GM12878 (cell line): ENCODE measurements at regions of chr3 and their contacts with region 1.

Region 1: GRCh38 chr3:120688121-120688520 is 6.1 kb upstream of the HGD start:
- DNase-seq: peak; percentile 55
- ATAC-seq: peak; percentile 96
- H3K4me3 ChIP-seq: 0 out of 2 replicates have a peak overlapping the region, but pooled peaks have one; percentile 30
- H3K27ac ChIP-seq: peak overlapping the region; percentile 75
- H3K4me1 ChIP-seq: peaks cover 7% of the 10 kb centered on the region; the same call in 1 of the 2 replicates
- H3K27me3 ChIP-seq: no peaks in the 10 kb centered on the region
- CTCF ChIP-seq: no peak
- EP300 ChIP-seq: 0 out of 4 replicates have a peak, but pooled peaks of 1 of the 2 experiments have one; percentile 41
- POLR2A ChIP-seq: no peak
- RAD21 ChIP-seq: no peak

Region 2: DNA sequence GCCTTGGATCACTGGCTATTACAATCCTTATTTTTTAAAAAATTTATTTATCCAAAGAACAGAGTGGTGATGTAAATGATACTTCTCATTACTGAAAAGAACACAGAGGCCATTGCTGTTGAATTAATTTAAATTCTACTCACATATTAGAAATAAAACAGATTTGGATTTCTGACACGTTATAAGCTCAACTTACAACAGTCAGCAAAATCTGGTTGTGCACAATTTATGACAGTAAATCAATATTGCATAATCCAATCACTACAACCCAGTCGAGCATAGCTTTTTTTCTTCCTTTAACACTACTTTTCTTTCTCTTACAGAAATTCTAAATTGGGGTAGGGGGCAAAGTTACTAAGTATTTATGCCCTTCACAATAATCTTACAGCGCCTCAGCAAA is 11.2 kb after region 1 on chr3:
- CTCF ChIA-PET with region 1: interaction called, 4 read pairs
- POLR2A ChIA-PET with region 1: interaction called, 3 read pairs
- RAD21 ChIA-PET with region 1: interaction called, 5 read pairs
- SMC1A ChIA-PET with region 1: interaction called, 15 read pairs
- in situ Hi-C with region 1: no loop called
- intact Hi-C with region 1: no loop called
- DNase-seq: no peak
- ATAC-seq: no peak
- H3K4me3 ChIP-seq: no peak overlapping the region
- H3K27ac ChIP-seq: no peak overlapping the region
- H3K4me1 ChIP-seq: no peaks in the 10 kb centered on the region
- H3K27me3 ChIP-seq: no peaks in the 10 kb centered on the region
- CTCF ChIP-seq: no peak
- EP300 ChIP-seq: no peak
- POLR2A ChIP-seq: no peak
- RAD21 ChIP-seq: no peak